Tibial artery (tissue), 4 donors: ENCODE measurements at regions of chr11 and their contacts with region 1.

Region 1: DNA sequence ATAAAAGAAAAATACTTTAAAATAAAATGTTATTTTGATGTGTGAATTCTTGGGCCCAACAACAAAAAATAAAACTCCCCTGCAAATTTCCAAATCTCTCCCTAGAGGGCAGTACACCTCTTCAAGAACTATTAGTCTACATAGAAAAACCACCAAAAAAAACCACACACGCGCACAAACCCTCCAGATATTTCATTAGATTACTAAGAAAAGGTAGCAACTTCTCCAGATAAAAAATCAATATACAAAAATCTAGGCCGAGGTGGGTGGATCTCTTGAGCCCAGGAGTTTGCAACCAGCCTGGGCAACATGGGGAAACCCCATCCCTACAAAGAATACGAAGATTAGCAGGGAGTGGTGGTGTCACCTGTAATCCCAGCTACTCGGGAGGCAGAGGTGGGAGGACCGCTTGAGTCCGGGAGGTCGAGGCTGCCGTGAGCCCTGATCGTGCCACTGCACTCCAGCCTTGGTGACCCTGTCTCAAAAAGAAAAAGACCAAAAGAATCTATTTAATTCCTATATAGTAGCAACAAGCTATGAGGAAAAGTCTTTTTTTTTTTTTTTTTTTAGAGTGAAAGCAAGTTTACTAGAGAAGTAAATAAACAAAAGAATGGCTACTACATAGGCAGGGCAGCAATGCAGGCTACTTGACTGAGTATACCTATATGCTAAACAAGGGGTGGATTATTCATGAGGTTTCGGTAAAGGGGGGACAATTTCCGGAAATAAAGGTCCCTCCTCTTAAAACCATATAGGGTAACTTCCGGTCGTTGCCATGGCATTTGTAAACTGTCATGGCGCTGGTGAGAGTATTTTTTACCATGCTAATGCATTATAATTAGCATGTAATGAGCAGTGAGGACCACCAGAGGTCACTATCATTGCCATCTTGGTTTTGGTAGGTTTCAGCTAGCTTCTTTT is 13.1 kb downstream of the B3GNT6 start:
- DNase-seq: peak; percentile 82
- H3K4me3 ChIP-seq: peak overlapping the region; percentile 40 to 48
- H3K27ac ChIP-seq: peak overlapping the region in 1 of 2 donors; percentile 1
- H3K4me1 ChIP-seq: peaks cover 0 to 8% (median 7%) of the 10 kb centered on the region in 4 donors
- H3K27me3 ChIP-seq: peaks cover 0 to 32% of the 10 kb centered on the region in 2 donors
- CTCF ChIP-seq: peak; percentile 69 to 80

Region 2: GRCh38 chr11:77091146-77091940 is 44.1 kb after region 1 on chr11:
- intact Hi-C with region 1: loop called (anchors 2 kb)
- DNase-seq: peak; percentile 85 to 86
- H3K4me3 ChIP-seq: no peak overlapping the region
- H3K27ac ChIP-seq: no peak overlapping the region
- H3K4me1 ChIP-seq: no peaks in the 10 kb centered on the region
- H3K27me3 ChIP-seq: no peaks in the 10 kb centered on the region
- CTCF ChIP-seq: peak; percentile 90 to 95

Region 3: DNA sequence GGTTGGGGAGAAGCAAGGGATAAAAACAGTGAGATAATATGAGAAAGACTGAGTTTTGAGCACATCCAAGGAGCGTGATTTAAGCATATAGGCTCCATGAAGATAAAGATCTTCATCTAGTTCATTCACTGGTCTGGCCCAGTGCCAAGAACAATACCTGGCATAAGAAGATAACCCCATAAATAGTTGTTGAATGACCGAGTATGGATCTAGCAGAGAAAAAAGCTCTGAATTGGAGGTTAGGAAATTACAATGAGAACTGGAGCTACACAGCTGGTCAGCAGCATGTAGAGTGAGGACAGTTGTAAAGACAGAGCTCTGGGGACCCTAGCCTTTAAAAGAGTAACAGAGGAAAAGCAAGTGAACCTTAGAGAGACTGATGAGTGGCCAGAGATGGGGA is 459.6 kb after region 1 on chr11:
- intact Hi-C with region 1: no loop called
- DNase-seq: no peak
- H3K4me3 ChIP-seq: no peak overlapping the region
- H3K27ac ChIP-seq: no peak overlapping the region
- H3K4me1 ChIP-seq: no peaks in the 10 kb centered on the region
- H3K27me3 ChIP-seq: no peaks in the 10 kb centered on the region
- CTCF ChIP-seq: no peak